ENCODE measurements at regions of chr1 and their contacts with region 1.

Region 1: DNA sequence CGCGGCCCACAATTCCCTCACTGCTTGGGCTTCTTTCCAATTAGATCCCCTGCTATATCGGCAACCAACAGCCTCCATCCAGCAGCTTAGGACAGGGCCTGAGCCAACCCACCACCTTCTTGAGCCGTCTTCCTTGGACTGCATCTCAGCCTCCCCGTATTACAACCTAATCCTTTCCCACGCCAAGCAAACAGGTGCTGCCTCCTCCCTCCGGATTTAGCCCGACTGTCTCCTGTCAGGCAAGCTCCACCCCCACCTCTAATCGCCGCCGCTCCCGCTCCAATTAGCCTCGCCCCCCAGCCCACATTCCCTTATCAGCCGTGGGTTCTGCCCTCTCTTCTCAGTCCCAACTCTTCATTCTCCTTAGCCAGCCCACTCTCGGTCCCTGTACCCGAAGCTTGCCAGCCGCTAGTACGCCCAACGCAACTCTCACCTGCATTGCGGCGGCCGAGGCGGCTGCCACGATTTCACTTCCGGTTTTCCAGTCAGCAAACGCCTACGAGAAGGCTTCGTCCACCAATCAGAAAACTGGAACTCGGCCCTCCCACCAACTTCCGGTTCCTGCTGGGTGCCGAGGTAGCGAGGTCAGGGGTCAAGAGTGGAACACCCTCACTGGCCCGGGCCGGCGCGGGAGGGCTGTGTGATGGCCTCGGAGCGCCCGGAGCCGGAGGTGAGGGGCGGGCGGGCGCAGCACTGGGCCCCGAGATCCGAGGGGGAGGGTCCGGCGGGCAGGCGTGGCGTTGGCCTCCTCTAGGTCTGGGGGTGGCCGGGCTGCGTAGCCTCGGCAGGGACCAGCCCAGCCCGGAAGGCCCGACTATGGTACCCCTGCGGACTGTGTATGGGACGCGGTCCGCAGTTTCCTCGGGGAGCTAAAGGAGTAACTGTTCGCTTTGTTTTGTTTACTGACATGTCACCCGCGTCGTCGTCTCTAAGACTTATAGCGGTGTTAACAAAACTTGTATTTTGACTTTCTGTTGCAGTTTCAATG is at the starts of genes MED8 and SZT2:
- DNase-seq: peak; percentile 95
- ATAC-seq: peak; percentile 99
- H3K4me3 ChIP-seq: peak within 1 kb of the TSS; percentile 76 to 98 (median 85)
- H3K27ac ChIP-seq: peak within 1 kb of the TSS; percentile 82
- H3K4me1 ChIP-seq: peaks cover 27% of the 10 kb centered on the region
- H3K27me3 ChIP-seq: peaks cover 0 to 3% of the 10 kb centered on the region in 2 experiments; a peak in 1 of 5 replicates
- CTCF ChIP-seq: peak; percentile 5; the same call in 1 of the 2 replicates
- EP300 ChIP-seq: no peak
- POLR2A ChIP-seq: peak; percentile 88
- RAD21 ChIP-seq: 0 out of 2 replicates have a peak, but pooled peaks have one; percentile 38
- total RNA-seq, gene MED8: 77.4 and 112 TPM in 2 replicates
- total RNA-seq, gene SZT2: 5.6 and 8.0 TPM in 2 replicates

Region 2: DNA sequence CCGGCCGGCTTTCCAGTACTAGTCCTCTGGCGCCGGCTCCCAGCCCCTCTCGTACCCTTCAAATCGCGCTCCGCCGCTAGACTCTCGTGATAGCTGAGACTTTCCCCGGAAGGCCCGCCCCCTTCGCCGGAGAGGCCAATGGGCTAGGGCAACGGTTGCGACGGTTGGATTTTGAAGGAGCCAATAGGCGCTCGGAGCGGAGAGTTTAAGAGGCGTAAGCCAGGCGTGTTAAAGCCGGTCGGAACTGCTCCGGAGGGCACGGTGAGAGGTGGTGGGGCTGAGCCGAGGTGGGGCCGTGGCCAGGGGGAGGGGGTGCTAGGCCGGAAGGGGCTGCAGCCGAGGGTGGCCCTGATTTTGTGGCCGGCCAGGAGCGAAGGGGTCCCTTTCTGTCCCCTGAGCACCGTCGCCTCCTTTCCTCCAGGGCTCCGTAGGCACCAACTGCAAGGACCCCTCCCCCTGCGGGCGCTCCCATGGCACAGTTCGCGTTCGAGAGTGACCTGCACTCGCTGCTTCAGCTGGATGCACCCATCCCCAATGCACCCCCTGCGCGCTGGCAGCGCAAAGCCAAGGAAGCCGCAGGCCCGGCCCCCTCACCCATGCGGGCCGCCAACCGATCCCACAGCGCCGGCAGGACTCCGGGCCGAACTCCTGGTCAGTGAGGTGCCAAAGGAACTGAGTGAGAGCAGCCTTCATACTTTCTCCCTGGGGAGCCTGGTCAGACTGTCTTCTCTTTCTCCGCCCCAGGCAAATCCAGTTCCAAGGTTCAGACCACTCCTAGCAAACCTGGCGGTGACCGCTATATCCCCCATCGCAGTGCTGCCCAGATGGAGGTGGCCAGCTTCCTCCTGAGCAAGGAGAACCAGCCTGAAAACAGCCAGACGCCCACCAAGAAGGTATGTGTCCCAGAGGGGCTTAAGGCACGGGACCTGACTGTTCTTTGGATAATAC is 30.6 kb before region 1 on chr1 and contains the start of gene CDC20:
- CTCF ChIA-PET with region 1: no interaction called
- POLR2A ChIA-PET with region 1: interaction called, 14 read pairs
- in situ Hi-C with region 1: no loop called
- intact Hi-C with region 1: no loop called
- DNase-seq: peak; percentile 97
- ATAC-seq: peak; percentile 96
- H3K4me3 ChIP-seq: peak within 1 kb of the TSS; percentile 92 to 97 (median 97)
- H3K27ac ChIP-seq: peak within 1 kb of the TSS; percentile 76
- H3K4me1 ChIP-seq: peaks cover 63% of the 10 kb centered on the region
- H3K27me3 ChIP-seq: no peaks in the 10 kb centered on the region; a peak in 1 of 5 replicates
- CTCF ChIP-seq: no peak
- EP300 ChIP-seq: no peak
- POLR2A ChIP-seq: peak; percentile 82 to 87
- RAD21 ChIP-seq: no peak
- total RNA-seq, gene CDC20: 90.0 and 97.8 TPM in 2 replicates

Region 3: DNA sequence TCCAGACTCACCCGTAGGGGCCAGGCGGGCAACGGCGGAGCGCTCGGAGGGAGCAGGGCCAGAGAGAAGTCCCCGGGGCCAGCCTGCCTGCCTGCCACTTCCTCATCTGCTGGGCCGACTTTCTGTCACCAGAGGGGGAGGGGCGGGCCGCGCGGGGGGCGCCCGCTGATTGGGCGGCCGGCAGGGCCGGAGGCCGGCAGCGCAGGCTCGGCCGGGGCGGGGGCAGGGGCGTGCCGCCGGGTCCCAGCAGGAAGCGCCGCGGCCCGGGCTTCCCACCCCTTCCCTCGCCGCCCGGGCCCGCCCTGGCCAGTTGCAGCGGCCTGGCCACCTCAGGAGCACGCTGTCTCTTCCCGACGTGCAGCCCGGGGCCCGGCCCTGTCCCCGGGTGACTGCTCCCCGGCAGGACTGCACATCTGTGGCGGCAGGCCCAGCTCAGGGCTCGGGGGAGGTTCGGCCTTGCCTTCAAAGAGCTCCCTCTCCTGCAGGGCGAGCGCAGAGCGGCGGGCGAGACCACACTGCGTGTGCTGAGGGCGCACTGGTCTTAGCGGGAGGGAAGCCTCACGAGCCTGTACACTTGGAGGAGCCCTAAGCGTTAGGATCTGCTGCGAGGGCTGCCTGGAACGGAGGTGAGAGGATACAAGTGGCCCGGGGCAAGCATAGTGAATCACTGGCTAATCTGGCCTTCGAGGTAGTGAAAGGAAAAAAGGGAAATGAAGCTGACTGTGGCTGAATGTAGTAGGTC is 21.5 kb before region 1 on chr1 and contains the start of gene ELOVL1:
- CTCF ChIA-PET with region 1: no interaction called
- POLR2A ChIA-PET with region 1: interaction called, 21 read pairs
- in situ Hi-C with region 1: no loop called
- intact Hi-C with region 1: no loop called
- DNase-seq: peak; percentile 75
- ATAC-seq: peak; percentile 89
- H3K4me3 ChIP-seq: peak within 1 kb of the TSS; percentile 76 to 88 (median 79)
- H3K27ac ChIP-seq: peak within 1 kb of the TSS; percentile 91
- H3K4me1 ChIP-seq: peaks cover 52% of the 10 kb centered on the region
- H3K27me3 ChIP-seq: no peaks in the 10 kb centered on the region
- CTCF ChIP-seq: peak; percentile 71
- EP300 ChIP-seq: no peak
- POLR2A ChIP-seq: peak; percentile 75 to 96
- RAD21 ChIP-seq: peak; percentile 60
- total RNA-seq, gene ELOVL1: 29.7 and 55.2 TPM in 2 replicates

Region 4: GRCh38 chr1:43481491-43481890 is 91.9 kb after region 1 on chr1:
- CTCF ChIA-PET with region 1: no interaction called
- POLR2A ChIA-PET with region 1: no interaction called
- in situ Hi-C with region 1: no loop called
- intact Hi-C with region 1: no loop called
- DNase-seq: no peak
- ATAC-seq: no peak
- H3K4me3 ChIP-seq: no peak overlapping the region
- H3K27ac ChIP-seq: no peak overlapping the region
- H3K4me1 ChIP-seq: no peaks in the 10 kb centered on the region
- H3K27me3 ChIP-seq: no peaks in the 10 kb centered on the region
- CTCF ChIP-seq: no peak
- EP300 ChIP-seq: no peak
- POLR2A ChIP-seq: no peak
- RAD21 ChIP-seq: no peak